ENCODE measurements at regions of chr6 and their contacts with region 1.

Region 1: GRCh38 chr6:117449549-117450439 is 24.1 kb upstream of the ROS1 start:
- DNase-seq: peak; percentile 77
- H3K4me3 ChIP-seq: no peak overlapping the region
- H3K27ac ChIP-seq: no peak overlapping the region
- H3K4me1 ChIP-seq: no peaks in the 10 kb centered on the region
- H3K27me3 ChIP-seq: no peaks in the 10 kb centered on the region
- CTCF ChIP-seq: peak; percentile 34 to 74 (median 43)
- POLR2A ChIP-seq: no peak

Region 2: GRCh38 chr6:117306227-117306785 is 143.5 kb before region 1 on chr6:
- intact Hi-C with region 1: no loop called
- DNase-seq: no peak
- H3K4me3 ChIP-seq: no peak overlapping the region
- H3K27ac ChIP-seq: no peak overlapping the region
- H3K4me1 ChIP-seq: no peaks in the 10 kb centered on the region
- H3K27me3 ChIP-seq: no peaks in the 10 kb centered on the region
- CTCF ChIP-seq: no peak
- POLR2A ChIP-seq: no peak

Region 3: DNA sequence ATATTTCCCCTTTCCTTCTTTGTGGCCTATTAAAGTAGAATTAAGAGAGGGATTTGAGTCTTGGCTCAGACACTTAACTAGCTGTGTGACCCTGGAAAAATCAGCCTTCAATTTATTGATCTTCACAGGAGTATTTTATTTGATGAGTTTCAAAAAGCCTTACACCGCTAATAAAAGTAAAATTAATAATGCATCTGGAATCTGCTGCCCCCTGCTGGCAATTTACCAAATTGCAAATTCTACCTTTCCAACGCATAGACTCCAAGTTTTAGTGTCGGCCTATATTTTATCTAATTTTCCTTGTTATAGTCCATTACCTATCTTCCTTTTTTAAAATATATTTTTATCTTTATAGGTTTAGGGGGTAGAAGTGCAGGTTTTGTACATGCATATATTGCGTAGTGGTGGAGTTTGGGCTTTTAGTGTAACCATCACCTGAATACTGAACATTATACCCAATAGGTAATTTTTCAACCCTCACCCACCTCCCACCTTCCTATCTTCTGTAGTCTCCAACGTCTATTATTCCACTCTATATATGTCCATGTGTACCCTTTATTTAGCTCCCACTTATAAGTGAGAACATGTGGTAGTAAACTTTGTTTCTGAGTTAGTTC is 106.2 kb after region 1 on chr6:
- intact Hi-C with region 1: loop called (anchors 10 kb)
- DNase-seq: peak; percentile 80
- H3K4me3 ChIP-seq: no peak overlapping the region
- H3K27ac ChIP-seq: no peak overlapping the region
- H3K4me1 ChIP-seq: no peaks in the 10 kb centered on the region
- H3K27me3 ChIP-seq: no peaks in the 10 kb centered on the region
- CTCF ChIP-seq: peak; percentile 67 to 99 (median 76)
- POLR2A ChIP-seq: no peak

Measured in testis (tissue), 5 donors.